CD4-positive, alpha-beta T cell (primary cell): ENCODE measurements at regions of chr3 and their contacts with region 1.

Region 1: DNA sequence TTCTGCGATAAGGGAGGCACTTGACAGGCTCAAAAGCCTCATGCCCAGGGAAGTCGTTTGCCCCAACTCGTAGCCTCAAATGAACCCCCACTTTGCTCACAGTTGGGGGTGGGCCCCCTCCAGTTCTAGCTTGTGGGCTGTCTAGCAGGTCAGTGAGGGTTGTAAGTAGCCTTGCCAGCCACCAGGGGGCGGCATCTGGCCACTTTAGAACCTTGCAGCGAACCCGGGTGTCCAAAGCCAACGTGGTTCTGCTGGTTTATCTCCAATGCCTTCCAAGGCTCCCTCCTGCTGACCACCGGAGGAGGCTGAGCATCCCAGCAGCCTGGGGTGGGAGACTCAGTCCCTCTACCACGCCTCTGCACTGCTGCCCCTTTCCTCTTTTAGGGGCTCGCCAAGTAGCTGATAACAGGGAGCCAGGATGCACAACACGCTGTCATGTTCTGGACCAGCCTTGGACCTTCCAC is 9.2 kb upstream of the RBSN start:
- DNase-seq: peak; percentile 55 to 88 (median 65)
- ATAC-seq: peak; percentile 98
- H3K4me3 ChIP-seq: no peak overlapping the region
- H3K4me3 Mint-ChIP-seq: no peak overlapping the region
- H3K27ac ChIP-seq: no peak overlapping the region
- H3K27ac Mint-ChIP-seq: no peak overlapping the region
- H3K4me1 ChIP-seq: peaks cover 7% of the 10 kb centered on the region
- H3K4me1 Mint-ChIP-seq: peaks cover 9% of the 10 kb centered on the region
- H3K27me3 ChIP-seq: no peaks in the 10 kb centered on the region
- H3K27me3 Mint-ChIP-seq: peaks cover 5% of the 10 kb centered on the region
- CTCF ChIP-seq: peak; percentile 87

Region 2: DNA sequence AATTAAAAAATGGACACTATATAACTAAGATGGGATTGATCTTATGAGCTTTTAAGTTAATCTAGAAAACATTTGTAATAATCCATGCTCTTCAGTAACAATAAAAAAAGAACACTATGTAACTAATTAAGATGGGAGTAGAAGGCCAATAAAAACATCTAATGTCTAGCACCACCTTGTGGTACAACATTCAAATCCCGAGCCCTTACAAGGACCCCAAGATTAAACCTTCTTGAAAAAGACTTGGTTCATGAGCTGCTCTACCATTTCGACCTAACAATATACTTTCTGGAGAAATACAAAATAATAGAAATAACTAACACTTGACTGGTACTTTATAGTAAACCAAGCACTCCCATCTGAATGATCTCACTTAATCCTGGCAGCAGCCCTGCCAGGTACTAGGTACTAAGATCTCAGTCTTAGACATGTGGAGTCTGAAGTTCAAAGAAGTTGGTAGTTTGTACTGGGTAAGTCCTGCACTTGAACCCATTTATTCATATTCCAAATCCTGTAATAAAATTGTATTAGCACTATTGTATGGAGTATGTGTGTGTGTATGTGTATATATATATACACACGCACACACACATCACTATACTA is 297.4 kb after region 1 on chr3:
- CTCF ChIA-PET with region 1: interaction called, 7 read pairs
- POLR2A ChIA-PET with region 1: no interaction called
- intact Hi-C with region 1: loop called (anchors 5 kb)
- DNase-seq: peak in 4 of 14 experiments; percentile 39 to 77 (median 72)
- ATAC-seq: peak; percentile 82
- H3K4me3 ChIP-seq: no peak overlapping the region
- H3K4me3 Mint-ChIP-seq: no peak overlapping the region
- H3K27ac ChIP-seq: no peak overlapping the region
- H3K27ac Mint-ChIP-seq: no peak overlapping the region
- H3K4me1 ChIP-seq: peaks cover 7% of the 10 kb centered on the region
- H3K4me1 Mint-ChIP-seq: peaks cover 1% of the 10 kb centered on the region
- H3K27me3 ChIP-seq: no peaks in the 10 kb centered on the region
- H3K27me3 Mint-ChIP-seq: no peaks in the 10 kb centered on the region
- CTCF ChIP-seq: peak; percentile 63

Region 3: GRCh38 chr3:15557511-15557946 is 449.4 kb after region 1 on chr3:
- CTCF ChIA-PET with region 1: no interaction called
- POLR2A ChIA-PET with region 1: no interaction called
- intact Hi-C with region 1: loop called in 1 of 2 experiments (anchors 1 kb)
- DNase-seq: peak; percentile 17 to 90 (median 38)
- ATAC-seq: peak; percentile 99
- H3K4me3 ChIP-seq: no peak overlapping the region
- H3K4me3 Mint-ChIP-seq: no peak overlapping the region
- H3K27ac ChIP-seq: no peak overlapping the region
- H3K27ac Mint-ChIP-seq: no peak overlapping the region
- H3K4me1 ChIP-seq: peaks cover 10% of the 10 kb centered on the region
- H3K4me1 Mint-ChIP-seq: peaks cover 13% of the 10 kb centered on the region
- H3K27me3 ChIP-seq: no peaks in the 10 kb centered on the region
- H3K27me3 Mint-ChIP-seq: no peaks in the 10 kb centered on the region
- CTCF ChIP-seq: peak; percentile 77

Region 4: GRCh38 chr3:16148783-16149182 is 1040.7 kb after region 1 on chr3:
- CTCF ChIA-PET with region 1: no interaction called
- POLR2A ChIA-PET with region 1: no interaction called
- intact Hi-C with region 1: no loop called
- DNase-seq: peak in 1 of 14 experiments; percentile 9
- ATAC-seq: no peak
- H3K4me3 ChIP-seq: no peak overlapping the region
- H3K4me3 Mint-ChIP-seq: no peak overlapping the region
- H3K27ac ChIP-seq: no peak overlapping the region
- H3K27ac Mint-ChIP-seq: no peak overlapping the region
- H3K4me1 ChIP-seq: no peaks in the 10 kb centered on the region
- H3K4me1 Mint-ChIP-seq: peaks cover 10% of the 10 kb centered on the region
- H3K27me3 ChIP-seq: peaks cover 0 to 5% of the 10 kb centered on the region in 2 experiments
- H3K27me3 Mint-ChIP-seq: peaks cover 8% of the 10 kb centered on the region
- CTCF ChIP-seq: no peak

Region 5: DNA sequence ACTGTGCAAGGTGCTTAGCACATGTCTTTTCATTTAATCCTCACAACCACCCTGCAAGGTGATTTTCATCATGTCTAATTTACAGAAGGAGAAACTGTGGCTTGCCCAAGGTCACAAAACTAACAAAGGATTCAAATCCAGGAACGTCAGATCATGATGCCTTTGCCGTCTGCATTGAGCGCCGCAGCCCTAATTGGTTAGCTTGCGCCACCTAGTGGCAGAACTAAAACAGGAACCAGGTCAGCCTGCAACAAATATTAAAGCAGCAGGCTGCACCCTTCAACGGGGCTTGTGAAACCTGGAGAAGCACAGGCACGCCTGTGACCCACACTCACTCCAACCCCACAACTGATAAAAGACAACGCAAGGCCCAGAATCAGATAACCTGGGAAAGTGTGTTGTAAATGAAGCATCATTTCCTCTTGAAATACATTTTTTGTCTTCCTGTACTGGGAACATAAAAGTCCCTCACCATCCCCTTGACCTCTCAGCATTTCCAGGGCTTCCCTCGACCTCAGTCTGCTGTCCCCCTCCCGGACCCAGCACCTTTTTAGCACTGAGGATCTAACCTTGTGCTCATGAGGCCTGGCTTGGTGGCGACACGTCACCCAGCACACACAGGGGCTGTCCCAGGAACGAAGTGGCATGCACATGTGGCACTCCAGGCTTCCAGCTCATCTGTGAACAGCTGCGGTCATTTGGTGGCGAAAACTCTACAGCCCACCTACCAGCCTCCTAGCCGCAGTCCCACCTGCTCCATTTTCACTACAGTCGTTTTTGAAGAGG is 1139.4 kb after region 1 on chr3:
- CTCF ChIA-PET with region 1: no interaction called
- POLR2A ChIA-PET with region 1: no interaction called
- intact Hi-C with region 1: loop called in 1 of 2 experiments (anchors 5 kb)
- DNase-seq: peak; percentile 58 to 89 (median 70)
- ATAC-seq: peak; percentile 94
- H3K4me3 ChIP-seq: no peak overlapping the region
- H3K4me3 Mint-ChIP-seq: no peak overlapping the region
- H3K27ac ChIP-seq: no peak overlapping the region
- H3K27ac Mint-ChIP-seq: no peak overlapping the region
- H3K4me1 ChIP-seq: peaks cover 9% of the 10 kb centered on the region
- H3K4me1 Mint-ChIP-seq: peaks cover 9% of the 10 kb centered on the region
- H3K27me3 ChIP-seq: no peaks in the 10 kb centered on the region
- H3K27me3 Mint-ChIP-seq: no peaks in the 10 kb centered on the region
- CTCF ChIP-seq: peak; percentile 91